ENCODE measurements at regions of chr3 and their contacts with region 1.

Region 1: DNA sequence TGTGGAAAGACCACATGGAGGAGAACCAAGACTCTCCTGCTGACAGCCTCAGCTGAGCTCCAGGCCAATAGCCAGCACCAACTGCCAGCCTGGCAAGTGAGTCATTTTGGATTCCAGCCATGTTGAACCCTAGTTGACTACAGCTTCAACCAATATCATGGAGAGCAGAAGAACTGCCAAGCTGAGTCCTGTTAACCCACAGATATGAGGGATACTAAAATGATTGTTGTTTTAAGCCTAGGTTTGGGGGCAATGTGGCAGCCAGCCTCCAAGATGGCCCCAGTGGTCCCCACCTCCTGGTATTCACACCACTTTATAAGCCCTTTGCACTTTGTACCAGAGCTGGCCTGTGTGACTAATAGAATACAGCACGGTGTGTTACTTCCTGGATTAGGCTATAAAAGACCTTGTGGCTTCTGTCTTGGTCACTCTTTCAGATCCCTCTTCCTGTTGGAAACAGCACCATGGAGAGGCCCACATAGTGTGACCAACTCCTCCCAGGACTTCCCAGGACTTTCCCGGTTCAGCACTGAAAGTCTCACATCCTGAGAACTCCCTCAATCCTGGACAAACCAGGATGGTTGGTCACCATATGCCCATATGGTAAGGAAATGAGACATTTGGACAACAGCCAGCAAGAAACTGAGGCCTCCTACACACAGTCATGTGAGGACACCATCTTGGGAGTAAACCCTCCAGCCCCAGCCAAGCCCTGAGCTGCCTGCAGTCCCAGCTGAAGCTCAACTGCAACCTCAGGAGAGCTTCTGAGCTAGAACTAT is 32.4 kb upstream of the CDV3 start:
- DNase-seq: peak; percentile 87
- H3K4me3 ChIP-seq: no peak overlapping the region
- H3K27ac ChIP-seq: peak overlapping the region; percentile 9
- H3K4me1 ChIP-seq: peaks cover 20% of the 10 kb centered on the region
- H3K27me3 ChIP-seq: no peaks in the 10 kb centered on the region
- CTCF ChIP-seq: no peak
- POLR2A ChIP-seq: no peak

Region 2: GRCh38 chr3:133192363-133192945 is 348.6 kb before region 1 on chr3:
- CTCF ChIA-PET with region 1: no interaction called
- POLR2A ChIA-PET with region 1: no interaction called
- dilution Hi-C with region 1: no loop called
- intact Hi-C with region 1: no loop called
- DNase-seq: no peak
- H3K4me3 ChIP-seq: no peak overlapping the region
- H3K27ac ChIP-seq: no peak overlapping the region
- H3K4me1 ChIP-seq: no peaks in the 10 kb centered on the region
- H3K27me3 ChIP-seq: no peaks in the 10 kb centered on the region
- CTCF ChIP-seq: no peak
- POLR2A ChIP-seq: no peak

Region 3: DNA sequence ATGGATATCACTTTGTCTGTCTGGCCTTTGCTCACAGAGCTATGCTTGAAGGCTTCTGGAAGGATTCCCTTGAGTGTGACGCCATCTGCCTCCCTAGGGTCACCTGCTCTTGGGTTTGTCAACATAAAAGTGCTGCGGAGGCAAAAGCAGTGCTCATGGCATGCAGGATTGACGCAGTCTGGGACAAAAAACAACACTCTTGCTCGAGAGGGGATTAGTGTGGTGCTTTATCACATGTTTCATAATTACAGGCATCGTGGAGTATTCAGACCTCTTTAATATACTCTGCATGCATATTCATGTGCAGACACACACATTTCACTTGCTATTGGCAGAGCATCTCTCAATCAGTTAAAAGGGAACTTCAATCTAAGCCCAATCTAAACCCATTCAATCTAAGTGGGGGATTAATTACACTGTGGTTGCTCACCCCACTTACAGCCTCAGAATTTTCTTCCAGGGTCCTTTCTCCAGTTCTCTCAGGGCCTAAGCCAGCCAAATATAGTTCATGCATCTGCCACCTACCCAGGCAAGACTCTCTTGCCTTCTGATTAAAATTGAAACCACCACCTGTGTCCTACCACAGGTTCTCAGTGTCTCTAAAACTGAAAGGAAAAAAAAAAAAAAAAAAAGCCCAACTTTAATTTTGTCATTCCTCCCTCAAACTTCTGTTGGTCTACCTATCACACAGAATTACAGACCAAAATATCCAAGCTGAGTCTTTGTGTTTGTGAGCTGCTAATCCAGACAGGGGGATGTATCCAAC is 65.7 kb before region 1 on chr3:
- CTCF ChIA-PET with region 1: no interaction called
- POLR2A ChIA-PET with region 1: no interaction called
- dilution Hi-C with region 1: no loop called
- intact Hi-C with region 1: no loop called
- DNase-seq: no peak
- H3K4me3 ChIP-seq: no peak overlapping the region
- H3K27ac ChIP-seq: no peak overlapping the region
- H3K4me1 ChIP-seq: no peaks in the 10 kb centered on the region
- H3K27me3 ChIP-seq: peaks cover 0 to 2% of the 10 kb centered on the region in 2 experiments
- CTCF ChIP-seq: no peak
- POLR2A ChIP-seq: no peak

Region 4: GRCh38 chr3:133494469-133494868 is 46.6 kb before region 1 on chr3:
- CTCF ChIA-PET with region 1: no interaction called
- POLR2A ChIA-PET with region 1: no interaction called
- dilution Hi-C with region 1: no loop called
- intact Hi-C with region 1: loop called (anchors 2 kb)
- DNase-seq: no peak
- H3K4me3 ChIP-seq: no peak overlapping the region
- H3K27ac ChIP-seq: no peak overlapping the region
- H3K4me1 ChIP-seq: peaks cover 6% of the 10 kb centered on the region
- H3K27me3 ChIP-seq: no peaks in the 10 kb centered on the region
- CTCF ChIP-seq: peak; percentile 44 to 46
- POLR2A ChIP-seq: no peak

Measured in endothelial cell of umbilical vein (primary cell).